Psoas muscle (tissue), 8 donors: ENCODE measurements at regions of chr14 and their contacts with region 1.

Region 1: GRCh38 chr14:89303457-89304435 is 113.3 kb downstream of the FOXN3 start:
- DNase-seq: peak; percentile 29 to 62
- ATAC-seq: peak; percentile 83 to 94 (median 88)
- H3K4me3 ChIP-seq: peak overlapping the region; percentile 55
- H3K27ac ChIP-seq: peak overlapping the region; percentile 96
- H3K4me1 ChIP-seq: peaks cover 54% of the 10 kb centered on the region
- H3K27me3 ChIP-seq: no peaks in the 10 kb centered on the region
- CTCF ChIP-seq: no peak

Region 2: DNA sequence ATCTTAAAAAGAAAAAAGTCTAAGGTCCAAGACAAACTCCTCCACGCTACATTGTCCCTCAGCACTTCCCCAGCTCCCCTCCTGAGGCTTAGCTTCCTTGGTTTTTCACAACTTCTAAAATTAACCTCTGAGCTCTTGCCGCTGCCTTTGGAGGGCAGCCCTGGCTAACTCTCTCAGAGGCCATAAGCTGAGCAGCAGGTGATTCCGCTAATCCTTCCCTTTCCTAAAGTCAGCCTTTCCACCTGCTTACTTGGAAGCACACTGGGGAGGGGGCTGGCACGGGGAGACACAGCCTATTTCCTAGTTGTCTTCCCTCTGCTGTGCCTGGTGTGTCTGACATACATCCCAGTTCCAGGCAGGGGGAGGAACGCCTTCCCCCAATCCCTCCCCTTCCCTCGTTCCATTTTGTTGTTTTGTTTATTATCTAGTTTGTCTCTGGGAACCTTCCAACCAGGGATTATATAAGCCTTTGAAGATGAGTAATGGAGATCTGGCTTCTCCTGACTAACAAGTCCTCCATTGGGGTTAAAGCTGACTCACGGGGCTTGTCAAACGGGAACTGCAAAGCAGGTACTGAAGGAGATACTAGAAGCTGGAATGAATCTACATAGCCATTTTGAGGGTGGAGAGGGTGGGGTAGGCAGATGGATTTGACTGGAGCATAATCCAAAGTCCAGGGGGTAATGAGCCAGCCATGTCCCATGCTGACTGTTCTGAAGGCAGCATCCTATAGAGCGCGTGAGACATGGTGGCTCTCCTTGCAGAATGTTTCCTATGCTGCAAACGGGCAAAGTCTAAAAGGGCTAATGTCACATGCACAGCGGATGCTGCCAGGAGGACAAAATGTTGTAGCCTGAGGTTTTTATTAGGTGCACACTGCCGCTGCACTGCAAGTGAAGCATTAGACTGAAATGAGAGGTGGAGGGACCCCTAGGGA is 117.6 kb before region 1 on chr14:
- intact Hi-C with region 1: no loop called
- DNase-seq: peak in 1 of 2 donors; percentile 69
- ATAC-seq: peak; percentile 79 to 90 (median 86)
- H3K4me3 ChIP-seq: peak overlapping the region; percentile 44
- H3K27ac ChIP-seq: peak overlapping the region; percentile 92
- H3K4me1 ChIP-seq: peaks cover 45% of the 10 kb centered on the region
- H3K27me3 ChIP-seq: no peaks in the 10 kb centered on the region
- CTCF ChIP-seq: no peak

Region 3: GRCh38 chr14:89258728-89259273 is 44.9 kb before region 1 on chr14:
- intact Hi-C with region 1: loop called in 1 of 2 experiments (anchors 5 kb)
- DNase-seq: no peak
- ATAC-seq: no peak
- H3K4me3 ChIP-seq: no peak overlapping the region
- H3K27ac ChIP-seq: no peak overlapping the region
- H3K4me1 ChIP-seq: peaks cover 22% of the 10 kb centered on the region
- H3K27me3 ChIP-seq: no peaks in the 10 kb centered on the region
- CTCF ChIP-seq: no peak

Region 4: DNA sequence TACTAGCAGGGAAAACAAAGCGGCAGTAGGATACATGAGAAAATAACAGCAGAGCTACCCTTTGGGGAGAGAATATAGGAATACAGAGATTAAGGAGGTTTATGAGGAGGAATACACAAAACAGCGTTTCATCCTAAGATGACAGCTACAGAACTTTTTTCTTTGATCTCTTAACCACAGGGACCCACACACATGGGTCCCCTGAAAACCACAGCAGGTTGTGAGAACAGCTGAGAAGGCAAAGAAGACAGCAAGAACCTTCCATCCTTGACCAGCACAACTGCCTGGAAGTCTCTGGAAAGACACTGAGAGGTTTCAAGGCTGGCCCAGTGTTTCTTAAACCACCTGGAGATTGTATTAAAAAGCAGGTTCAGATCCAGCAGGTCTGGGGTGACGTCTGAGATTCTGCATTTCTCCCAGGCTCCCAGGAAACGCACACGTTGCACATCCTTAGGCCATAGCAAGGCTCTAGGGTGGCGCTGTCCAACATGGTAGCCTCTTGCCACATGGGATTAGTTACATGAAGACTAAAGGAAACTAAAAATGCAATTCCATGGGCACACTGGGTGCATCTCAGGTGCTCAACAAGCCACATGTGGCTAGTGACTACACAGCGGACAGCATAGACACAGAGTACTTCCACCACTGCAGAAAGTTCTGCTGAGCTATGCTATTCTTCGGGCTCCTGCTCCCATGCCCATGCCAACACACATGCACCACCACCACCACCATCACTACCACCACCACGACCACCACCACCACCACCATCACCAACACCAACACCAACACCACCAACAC is 21.0 kb after region 1 on chr14:
- intact Hi-C with region 1: no loop called
- DNase-seq: no peak
- ATAC-seq: no peak
- H3K4me3 ChIP-seq: no peak overlapping the region
- H3K27ac ChIP-seq: no peak overlapping the region
- H3K4me1 ChIP-seq: peaks cover 6% of the 10 kb centered on the region
- H3K27me3 ChIP-seq: no peaks in the 10 kb centered on the region
- CTCF ChIP-seq: no peak

Region 5: GRCh38 chr14:89340200-89341181 is 36.7 kb after region 1 on chr14:
- intact Hi-C with region 1: loop called (anchors 5 kb)
- DNase-seq: no peak
- ATAC-seq: peak in 1 of 4 donors; percentile 41
- H3K4me3 ChIP-seq: no peak overlapping the region
- H3K27ac ChIP-seq: peak overlapping the region; percentile 36
- H3K4me1 ChIP-seq: peaks cover 46% of the 10 kb centered on the region
- H3K27me3 ChIP-seq: no peaks in the 10 kb centered on the region
- CTCF ChIP-seq: no peak